ENCODE measurements at regions of chr16 and their contacts with region 1.

Region 1: DNA sequence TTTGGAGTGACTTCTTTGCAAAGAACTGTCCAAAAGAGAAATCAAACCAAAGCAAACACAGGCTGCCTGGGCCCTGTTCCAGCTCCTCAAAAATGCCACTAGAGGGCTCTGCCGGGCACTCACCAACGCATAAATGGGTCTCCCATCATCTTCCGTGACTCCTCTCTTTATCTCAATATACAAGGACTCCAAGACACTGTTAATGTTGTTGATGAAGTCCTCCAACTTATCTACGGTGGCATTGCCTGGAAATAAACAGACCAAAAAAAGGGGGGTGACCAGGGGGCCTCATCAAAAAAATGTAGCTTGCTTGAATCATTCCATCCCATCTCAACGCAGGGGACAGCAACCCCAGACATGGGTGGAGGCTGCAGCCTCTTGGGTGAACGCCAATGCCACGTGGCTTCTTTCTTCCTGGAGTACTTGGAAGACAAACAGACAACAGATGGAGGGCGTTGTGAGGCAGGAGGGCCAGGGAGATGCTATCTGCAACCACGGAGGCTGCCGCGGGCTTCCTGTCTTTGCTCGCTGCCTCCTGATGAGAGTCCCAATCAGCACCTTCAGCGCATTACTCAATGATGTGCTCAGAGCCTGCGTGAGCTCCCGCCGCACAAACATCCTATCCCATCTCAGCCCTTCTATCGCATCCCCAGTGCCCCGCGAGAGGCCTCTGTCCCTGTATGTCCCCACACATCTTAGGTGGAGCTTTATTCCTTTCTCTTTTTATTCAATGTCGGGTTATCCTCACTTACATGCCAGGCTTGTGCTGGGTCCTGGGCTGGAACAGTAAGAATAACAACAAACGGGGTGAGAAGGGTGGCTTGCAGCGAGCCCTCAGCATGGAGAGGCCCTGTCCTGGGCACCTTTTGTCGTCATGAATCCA is 32.0 kb downstream of the KDM8 start:
- DNase-seq: peak; percentile 47 to 66 (median 66)
- H3K4me3 ChIP-seq: peak overlapping the region; percentile 10 to 71 (median 29)
- H3K4me3 Mint-ChIP-seq: peak overlapping the region; percentile 80 to 89
- H3K27ac ChIP-seq: peak overlapping the region in 1 of 2 donors; percentile 54
- H3K27ac Mint-ChIP-seq: peak overlapping the region in 4 of 7 donors; percentile 15 to 83 (median 45)
- H3K4me1 ChIP-seq: peaks cover 36 to 53% of the 10 kb centered on the region in 2 donors
- H3K4me1 Mint-ChIP-seq: peaks cover 52% of the 10 kb centered on the region
- H3K27me3 ChIP-seq: no peaks in the 10 kb centered on the region
- H3K27me3 Mint-ChIP-seq: peaks cover 0 to 7% (median 2%) of the 10 kb centered on the region in 3 donors
- CTCF ChIP-seq: peak; percentile 86

Region 2: DNA sequence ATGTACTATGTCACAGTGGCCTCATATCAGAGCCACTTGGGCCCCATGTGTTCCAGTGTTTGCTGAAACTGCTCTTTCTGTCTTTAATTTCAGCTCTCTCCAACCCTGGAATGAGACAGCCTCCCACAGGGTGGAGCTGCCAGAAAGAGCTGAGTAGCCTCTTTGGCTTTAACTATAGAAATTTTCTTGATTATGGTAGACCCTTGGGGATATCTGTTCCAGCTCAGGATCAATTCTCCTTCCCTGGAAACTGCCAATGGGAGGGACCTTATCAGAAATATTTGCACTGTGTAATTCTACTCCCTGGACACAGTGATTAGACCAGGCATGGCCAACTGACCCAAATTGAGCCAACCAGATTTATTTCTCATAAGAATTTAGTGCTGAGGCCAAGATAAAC is 70.9 kb before region 1 on chr16:
- intact Hi-C with region 1: no loop called
- DNase-seq: no peak
- H3K4me3 ChIP-seq: no peak overlapping the region
- H3K4me3 Mint-ChIP-seq: no peak overlapping the region
- H3K27ac ChIP-seq: no peak overlapping the region
- H3K27ac Mint-ChIP-seq: no peak overlapping the region
- H3K4me1 ChIP-seq: no peaks in the 10 kb centered on the region
- H3K4me1 Mint-ChIP-seq: no peaks in the 10 kb centered on the region
- H3K27me3 ChIP-seq: no peaks in the 10 kb centered on the region
- H3K27me3 Mint-ChIP-seq: peaks cover 0 to 5% (median 4%) of the 10 kb centered on the region in 3 donors
- CTCF ChIP-seq: no peak

Region 3: DNA sequence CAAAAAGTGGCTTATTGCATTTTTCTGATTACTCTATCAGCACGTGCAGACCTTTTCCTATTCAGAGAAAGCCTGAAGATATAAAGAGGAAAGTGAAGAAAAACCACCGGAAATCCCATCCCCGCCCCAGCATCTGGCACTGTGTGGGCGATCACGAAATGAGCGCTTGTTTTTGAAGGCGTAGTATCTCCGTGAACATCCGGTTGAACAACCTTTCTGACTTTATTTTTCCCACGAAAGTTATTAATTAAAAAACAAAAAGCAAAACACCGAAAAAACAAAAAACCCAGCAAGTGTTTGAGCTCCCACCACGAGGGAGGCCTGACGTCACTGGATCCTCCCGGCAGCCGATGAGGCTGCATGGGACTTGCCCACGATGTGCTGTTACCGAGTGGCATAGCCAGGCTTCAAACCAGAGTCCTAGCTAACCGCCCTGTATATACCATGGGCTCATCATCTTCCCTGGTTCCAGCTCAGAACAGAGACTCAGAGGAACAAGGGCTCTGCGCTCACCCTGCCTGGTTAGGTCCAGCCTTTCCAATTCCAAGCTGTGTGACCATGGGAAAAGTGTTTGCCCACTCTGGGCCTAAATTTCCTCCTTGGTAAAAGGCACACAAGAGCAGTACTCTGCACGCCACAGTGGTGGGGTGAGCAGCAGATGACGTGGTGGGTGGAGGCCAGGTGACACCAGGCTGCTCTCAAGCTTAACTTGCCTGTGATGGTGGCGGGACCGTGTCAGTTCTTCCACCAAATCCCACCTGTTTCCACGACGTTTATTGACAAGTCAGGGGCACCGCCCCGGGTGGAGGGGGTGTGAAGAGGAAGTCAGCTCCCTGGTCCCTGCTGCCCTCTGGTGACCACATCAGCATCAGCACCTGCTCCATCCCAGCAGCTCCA is 132.4 kb after region 1 on chr16:
- intact Hi-C with region 1: loop called (anchors 5 kb)
- DNase-seq: peak; percentile 72 to 90 (median 73)
- H3K4me3 ChIP-seq: peak overlapping the region; percentile 2 to 68 (median 25)
- H3K4me3 Mint-ChIP-seq: peak overlapping the region; percentile 66 to 85
- H3K27ac ChIP-seq: peak overlapping the region; percentile 37 to 82
- H3K27ac Mint-ChIP-seq: peak overlapping the region; percentile 80 to 90 (median 89)
- H3K4me1 ChIP-seq: peaks cover 22 to 24% of the 10 kb centered on the region in 2 donors
- H3K4me1 Mint-ChIP-seq: peaks cover 23% of the 10 kb centered on the region
- H3K27me3 ChIP-seq: no peaks in the 10 kb centered on the region
- H3K27me3 Mint-ChIP-seq: peaks cover 0 to 5% (median 0%) of the 10 kb centered on the region in 3 donors
- CTCF ChIP-seq: peak; percentile 87